Activated CD4-positive, alpha-beta T cell treated with anti-CD3 and anti-CD28 coated beads for 36 hours (primary cell): ENCODE measurements at regions of chr3 and their contacts with region 1.

Region 1: DNA sequence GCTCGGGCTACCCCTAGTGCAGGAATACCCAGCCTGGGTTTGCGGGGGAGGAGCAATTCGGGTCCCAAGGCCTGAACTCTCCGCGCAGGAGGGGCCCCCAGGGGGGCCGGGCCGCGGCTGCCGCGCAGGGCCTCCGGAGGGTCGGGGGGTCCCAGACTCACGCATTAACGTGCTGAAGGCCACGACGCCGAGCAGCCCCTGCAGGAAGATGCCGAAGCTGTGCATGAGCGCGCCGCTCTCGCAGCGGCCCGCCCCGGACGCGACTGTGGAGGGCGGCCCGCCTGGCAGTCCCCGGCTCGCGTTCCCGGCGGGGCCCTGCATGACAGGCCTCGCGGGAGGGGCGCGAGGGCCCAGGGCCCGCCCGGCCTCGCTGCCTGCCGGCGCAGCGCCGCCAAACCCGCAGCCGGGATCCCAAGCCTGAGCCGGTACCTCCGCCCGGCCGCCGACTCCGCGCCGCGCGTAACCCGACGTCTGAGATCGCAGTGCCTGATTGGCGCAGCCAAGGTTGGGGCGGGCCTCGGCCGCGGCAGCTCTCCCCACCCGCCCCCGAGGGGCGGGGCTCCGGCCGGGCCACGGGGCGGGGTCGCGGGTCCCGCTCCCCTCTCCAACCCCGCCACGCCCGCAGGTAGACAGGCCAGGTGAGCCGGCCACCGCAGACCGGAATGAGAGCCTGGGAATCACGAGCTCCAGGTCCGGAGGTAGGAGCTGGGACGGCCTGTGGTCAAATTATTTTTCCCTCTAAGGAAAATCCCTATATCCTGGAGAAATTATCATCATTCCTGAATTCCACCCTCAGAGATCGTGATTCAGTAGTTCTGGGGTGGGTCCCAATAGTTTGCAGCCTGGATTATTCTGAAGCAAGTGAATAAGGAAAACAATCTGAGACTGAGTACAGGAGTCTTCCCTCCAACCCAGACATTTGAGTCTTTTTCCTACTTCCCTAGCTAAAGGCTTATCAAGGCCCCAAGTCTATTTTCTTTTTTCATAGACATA is at the start of gene STIMATE:
- DNase-seq: peak; percentile 91
- ATAC-seq: peak; percentile 82
- H3K4me3 Mint-ChIP-seq: peak within 1 kb of the TSS; percentile 81
- H3K27ac Mint-ChIP-seq: peak within 1 kb of the TSS; percentile 48
- H3K4me1 Mint-ChIP-seq: peaks cover 49% of the 10 kb centered on the region
- H3K27me3 Mint-ChIP-seq: no peaks in the 10 kb centered on the region
- total RNA-seq, gene STIMATE: 12.0 to 17.1 TPM

Region 2: GRCh38 chr3:52278510-52279069 is 618.8 kb before region 1 on chr3 and contains the start of gene WDR82:
- CTCF ChIA-PET with region 1: no interaction called
- POLR2A ChIA-PET with region 1: no interaction called
- intact Hi-C with region 1: loop called in 1 of 2 experiments (anchors 10 kb)
- DNase-seq: peak; percentile 100
- ATAC-seq: peak; percentile 78
- H3K4me3 Mint-ChIP-seq: peak within 1 kb of the TSS; percentile 99
- H3K27ac Mint-ChIP-seq: peak within 1 kb of the TSS; percentile 99
- H3K4me1 Mint-ChIP-seq: peaks cover 56% of the 10 kb centered on the region
- H3K27me3 Mint-ChIP-seq: no peaks in the 10 kb centered on the region
- total RNA-seq, gene WDR82: 95.2 to 113 TPM

Region 3: DNA sequence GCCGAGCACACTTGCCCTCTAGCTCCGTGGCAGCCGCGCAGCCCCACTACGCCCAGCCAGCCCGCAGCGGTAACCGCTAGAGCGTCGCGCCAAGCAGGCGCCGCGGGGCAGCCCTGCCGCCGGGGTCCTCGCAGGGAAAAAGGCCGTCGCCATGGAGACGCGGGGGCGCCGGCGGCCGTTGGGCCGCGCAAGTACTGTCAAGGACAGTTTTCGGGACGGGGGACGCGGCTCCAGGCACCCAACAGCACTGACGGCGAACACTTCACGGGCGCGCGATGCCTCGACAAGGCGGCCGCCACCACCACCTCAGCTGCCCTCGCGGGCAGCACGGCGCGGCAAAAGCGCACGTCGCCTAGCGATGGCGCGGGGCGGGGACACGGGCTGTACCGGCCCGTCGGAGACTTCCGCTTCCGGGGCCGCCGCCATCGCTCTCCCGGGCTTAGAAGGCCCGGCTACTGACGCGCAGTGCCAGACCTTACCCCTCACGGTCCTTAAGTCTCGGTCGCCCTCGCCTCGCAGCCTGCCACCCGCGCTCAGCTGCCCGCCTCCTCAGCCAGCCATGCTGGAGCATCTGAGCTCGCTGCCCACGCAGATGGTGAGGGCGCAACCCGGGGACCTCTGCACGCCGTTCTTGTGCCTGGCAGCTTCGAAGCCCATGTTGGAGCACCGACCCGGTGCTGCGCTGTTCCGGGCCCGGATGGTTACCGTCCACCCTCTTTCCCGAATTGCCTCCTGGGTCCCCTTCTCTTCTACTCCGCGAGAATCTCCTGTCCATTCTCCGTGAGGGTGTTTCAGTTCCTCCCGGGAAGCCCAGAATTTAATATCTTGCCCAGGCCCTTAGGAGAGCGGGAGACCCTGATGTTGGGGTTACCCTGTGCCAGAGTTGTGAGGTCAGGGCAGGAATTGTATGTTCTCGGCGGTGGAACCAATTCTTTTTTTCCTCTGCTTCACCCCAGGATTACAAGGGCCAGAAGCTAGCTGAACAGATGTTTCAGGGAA is 191.4 kb before region 1 on chr3 and contains the starts of genes GLT8D1 and SPCS1:
- CTCF ChIA-PET with region 1: no interaction called
- POLR2A ChIA-PET with region 1: no interaction called
- intact Hi-C with region 1: loop called (anchors 2 to 10 kb)
- DNase-seq: peak; percentile 92
- ATAC-seq: peak; percentile 94
- H3K4me3 Mint-ChIP-seq: peak within 1 kb of the TSS; percentile 89
- H3K27ac Mint-ChIP-seq: peak within 1 kb of the TSS; percentile 90
- H3K4me1 Mint-ChIP-seq: peaks cover 28% of the 10 kb centered on the region
- H3K27me3 Mint-ChIP-seq: no peaks in the 10 kb centered on the region
- total RNA-seq, gene GLT8D1: 35.2 to 38.0 TPM
- total RNA-seq, gene SPCS1: 111 to 120 TPM

Region 4: DNA sequence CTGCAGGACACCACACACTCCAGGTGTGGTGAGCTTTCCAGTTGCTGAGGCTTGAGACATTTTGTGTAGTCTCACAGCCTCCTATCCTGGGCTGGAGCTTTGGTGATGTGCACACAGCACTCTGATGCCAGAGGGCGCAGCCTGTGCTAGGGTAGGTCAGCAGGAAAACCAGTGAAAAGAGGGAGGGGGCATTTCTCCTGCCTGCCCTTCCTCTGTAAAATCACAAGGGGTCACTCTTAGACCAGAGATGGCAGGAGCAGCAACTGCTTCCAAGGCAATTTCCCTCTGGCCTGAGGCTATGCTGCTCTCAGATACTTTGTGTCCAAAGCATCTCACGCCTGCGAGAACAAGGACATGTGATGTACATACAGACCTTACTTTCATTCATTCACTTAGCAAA is 46.1 kb before region 1 on chr3:
- CTCF ChIA-PET with region 1: interaction called, 5 read pairs
- POLR2A ChIA-PET with region 1: no interaction called
- intact Hi-C with region 1: loop called in 1 of 2 experiments (anchors 5 kb)
- DNase-seq: peak; percentile 50
- ATAC-seq: peak; percentile 88
- H3K4me3 Mint-ChIP-seq: no peak overlapping the region
- H3K27ac Mint-ChIP-seq: no peak overlapping the region
- H3K4me1 Mint-ChIP-seq: no peaks in the 10 kb centered on the region
- H3K27me3 Mint-ChIP-seq: no peaks in the 10 kb centered on the region

Region 5: GRCh38 chr3:52983336-52983807 is 85.9 kb after region 1 on chr3:
- CTCF ChIA-PET with region 1: interaction called, 3 read pairs
- POLR2A ChIA-PET with region 1: interaction called, 3 read pairs
- intact Hi-C with region 1: loop called in 1 of 2 experiments (anchors 2 kb)
- DNase-seq: peak; percentile 86
- ATAC-seq: peak; percentile 83
- H3K4me3 Mint-ChIP-seq: peak overlapping the region; percentile 55
- H3K27ac Mint-ChIP-seq: peak overlapping the region; percentile 95
- H3K4me1 Mint-ChIP-seq: peaks cover 44% of the 10 kb centered on the region
- H3K27me3 Mint-ChIP-seq: no peaks in the 10 kb centered on the region

Region 6: GRCh38 chr3:53130179-53131061 is 233.0 kb after region 1 on chr3 and contains the start of gene RFT1:
- CTCF ChIA-PET with region 1: no interaction called
- POLR2A ChIA-PET with region 1: no interaction called
- intact Hi-C with region 1: loop called in 1 of 2 experiments (anchors 1 kb)
- DNase-seq: peak; percentile 99
- ATAC-seq: peak; percentile 93
- H3K4me3 Mint-ChIP-seq: peak within 1 kb of the TSS; percentile 98
- H3K27ac Mint-ChIP-seq: peak within 1 kb of the TSS; percentile 95
- H3K4me1 Mint-ChIP-seq: peaks cover 22% of the 10 kb centered on the region
- H3K27me3 Mint-ChIP-seq: no peaks in the 10 kb centered on the region
- total RNA-seq, gene RFT1: 39.8 to 49.0 TPM

Region 7: DNA sequence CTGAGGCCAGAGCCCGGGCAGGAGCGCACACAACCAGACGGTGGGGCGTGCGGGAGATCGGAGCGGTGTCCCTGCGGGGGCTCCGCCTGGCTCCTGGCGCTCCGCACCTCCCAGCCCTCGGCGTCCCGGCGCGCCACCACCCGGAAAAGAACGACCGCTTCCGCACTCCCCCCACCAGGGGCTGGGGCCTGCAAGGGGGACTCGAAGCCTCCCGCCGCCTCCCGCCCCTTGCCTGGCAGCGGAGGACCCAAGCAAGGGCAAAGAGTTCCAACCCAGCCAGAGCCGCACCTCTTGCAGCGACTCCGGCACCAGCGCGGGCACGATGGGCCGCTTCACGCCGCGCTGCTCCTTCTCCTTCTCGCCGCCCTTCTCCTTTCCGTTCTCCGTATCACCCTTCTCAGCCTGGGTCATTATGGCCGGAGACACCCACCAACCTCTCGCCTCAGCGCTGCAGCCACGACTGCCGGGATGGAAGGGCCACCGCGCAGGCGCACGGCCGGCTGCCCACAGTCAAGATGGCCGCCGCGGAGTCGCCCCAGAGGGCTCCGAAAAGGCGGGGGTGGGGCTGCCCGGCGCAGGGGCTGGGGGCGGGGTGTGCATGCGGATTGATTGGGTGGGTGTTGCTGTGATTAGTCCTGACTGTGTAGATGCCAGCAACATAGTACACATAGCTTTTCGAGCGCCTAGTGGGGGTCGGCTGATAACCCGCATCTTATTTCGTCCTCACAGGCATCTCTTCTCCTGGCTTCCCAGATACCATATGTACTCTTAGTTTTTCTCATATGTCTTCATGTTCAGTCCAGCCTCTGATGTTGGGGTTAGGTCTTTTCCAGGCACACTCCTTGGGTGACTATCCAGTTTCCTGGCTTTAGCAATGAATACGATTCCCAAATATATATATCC is 984.5 kb after region 1 on chr3 and contains the start of gene ACTR8:
- CTCF ChIA-PET with region 1: no interaction called
- POLR2A ChIA-PET with region 1: no interaction called
- intact Hi-C with region 1: loop called in 1 of 2 experiments (anchors 10 kb)
- DNase-seq: peak; percentile 90
- ATAC-seq: peak; percentile 92
- H3K4me3 Mint-ChIP-seq: peak within 1 kb of the TSS; percentile 100
- H3K27ac Mint-ChIP-seq: peak within 1 kb of the TSS; percentile 99
- H3K4me1 Mint-ChIP-seq: peaks cover 20% of the 10 kb centered on the region
- H3K27me3 Mint-ChIP-seq: no peaks in the 10 kb centered on the region
- total RNA-seq, gene ACTR8: 26.0 to 28.9 TPM